Activated B cell treated with CpG ODN at 0.5 μM for 24 hours (primary cell): ENCODE measurements at regions of chr5 and their contacts with region 1.

Region 1: DNA sequence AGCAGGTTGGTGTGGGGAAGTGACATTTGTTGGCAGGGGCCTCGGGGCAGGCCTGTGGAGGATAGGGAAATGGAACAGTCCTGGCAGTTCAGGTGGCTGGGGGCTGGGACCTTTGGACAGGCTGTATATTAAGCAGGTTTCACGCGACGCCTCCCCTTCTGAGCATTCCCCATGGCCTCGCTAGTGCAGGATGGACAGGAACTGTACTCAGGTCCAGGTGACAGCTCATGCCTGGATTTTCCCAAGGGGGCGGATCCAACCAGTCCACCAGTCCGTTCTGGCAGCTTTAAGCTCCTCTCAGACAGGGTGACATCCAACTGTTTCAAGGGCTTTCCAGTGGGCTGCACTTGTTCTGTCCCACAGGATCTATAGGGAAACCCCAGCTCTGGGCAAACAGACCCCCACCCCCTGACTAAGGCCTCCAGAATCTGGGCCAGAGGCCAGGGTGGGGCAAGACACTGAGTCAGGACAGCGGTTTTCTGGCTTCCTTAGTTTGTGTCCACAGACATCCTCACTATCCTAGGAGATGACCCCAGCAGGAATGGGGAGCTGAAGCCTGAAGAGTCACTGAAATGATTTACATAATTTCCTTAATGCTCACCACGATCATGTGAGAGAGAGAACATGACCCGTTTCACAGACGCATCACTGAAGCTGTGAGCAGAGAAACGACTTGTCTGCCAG is 20.9 kb downstream of the CSF2 start:
- DNase-seq: no peak
- ATAC-seq: peak; percentile 19
- H3K4me3 Mint-ChIP-seq: no peak overlapping the region
- H3K27ac Mint-ChIP-seq: peak overlapping the region; percentile 84
- H3K4me1 Mint-ChIP-seq: peaks cover 57% of the 10 kb centered on the region
- H3K27me3 Mint-ChIP-seq: no peaks in the 10 kb centered on the region
- CTCF ChIP-seq: no peak

Region 2: DNA sequence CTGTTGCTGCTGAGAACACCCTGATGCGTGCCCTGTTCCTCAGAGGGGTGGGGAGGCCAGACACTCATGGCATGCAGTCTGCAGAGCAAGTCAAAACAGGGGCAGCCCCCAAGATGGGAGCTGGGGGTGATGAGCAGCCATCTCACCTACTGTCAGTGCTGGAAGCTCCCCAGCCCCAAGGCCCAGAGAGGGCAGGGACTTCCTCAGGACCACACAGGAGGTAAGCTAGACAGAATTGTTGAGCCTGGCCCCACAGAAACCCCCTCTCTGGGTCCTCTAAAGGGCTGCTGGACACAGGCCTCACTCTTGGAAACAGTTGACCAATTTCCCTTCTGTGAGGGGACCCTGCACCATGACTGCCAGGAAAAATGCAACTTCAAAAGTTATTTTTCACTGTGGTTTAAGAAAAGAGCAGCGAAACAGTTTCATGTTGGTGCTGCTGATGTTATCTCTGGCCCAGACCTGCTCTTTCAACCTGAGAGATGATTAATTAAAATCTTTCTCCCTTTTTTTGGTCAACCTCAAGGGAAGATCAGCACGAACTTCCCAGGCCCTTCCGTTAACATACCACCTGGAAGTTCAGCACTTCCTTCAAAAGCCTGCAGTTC is 11.4 kb before region 1 on chr5:
- CTCF ChIA-PET with region 1: no interaction called
- POLR2A ChIA-PET with region 1: no interaction called
- intact Hi-C with region 1: loop called (anchors 1 kb)
- DNase-seq: no peak
- ATAC-seq: no peak
- H3K4me3 Mint-ChIP-seq: no peak overlapping the region
- H3K27ac Mint-ChIP-seq: no peak overlapping the region
- H3K4me1 Mint-ChIP-seq: no peaks in the 10 kb centered on the region
- H3K27me3 Mint-ChIP-seq: no peaks in the 10 kb centered on the region
- CTCF ChIP-seq: no peak

Region 3: DNA sequence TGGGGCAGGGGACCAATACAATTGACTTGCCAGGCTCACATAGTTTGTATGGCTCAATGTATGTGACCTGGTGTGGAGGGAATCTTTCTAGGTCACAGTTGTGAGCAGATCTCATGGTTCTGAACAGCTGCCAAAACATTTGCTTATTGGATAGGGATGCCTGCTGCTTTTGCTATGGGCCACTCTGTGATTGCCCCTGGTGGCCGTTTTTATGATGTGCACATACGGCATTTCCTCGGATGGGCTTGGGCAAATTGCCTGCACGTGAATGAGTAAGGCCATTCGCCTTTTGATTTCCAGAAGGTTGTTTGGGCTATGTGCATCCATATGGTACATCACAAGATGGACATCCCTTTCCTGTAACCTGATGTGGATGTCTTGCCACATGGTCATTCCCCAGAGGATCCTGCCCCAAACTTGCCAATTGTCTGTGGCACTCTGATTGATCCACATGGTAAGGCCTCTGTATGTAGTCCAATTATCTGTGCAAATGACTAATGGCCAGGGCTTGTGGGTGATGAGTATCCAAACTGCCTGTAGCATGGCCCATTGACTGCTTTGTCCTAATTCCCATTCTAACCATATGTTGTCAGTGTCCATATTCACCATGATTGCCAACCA is 189.0 kb after region 1 on chr5:
- CTCF ChIA-PET with region 1: no interaction called
- POLR2A ChIA-PET with region 1: no interaction called
- intact Hi-C with region 1: loop called (anchors 2 kb)
- DNase-seq: no peak
- ATAC-seq: no peak
- H3K4me3 Mint-ChIP-seq: no peak overlapping the region
- H3K27ac Mint-ChIP-seq: no peak overlapping the region
- H3K4me1 Mint-ChIP-seq: peaks cover 3% of the 10 kb centered on the region
- H3K27me3 Mint-ChIP-seq: peaks cover 10% of the 10 kb centered on the region
- CTCF ChIP-seq: no peak